Calu3 (cell line): ENCODE measurements at regions of chr5 and their contacts with region 1.

Region 1: DNA sequence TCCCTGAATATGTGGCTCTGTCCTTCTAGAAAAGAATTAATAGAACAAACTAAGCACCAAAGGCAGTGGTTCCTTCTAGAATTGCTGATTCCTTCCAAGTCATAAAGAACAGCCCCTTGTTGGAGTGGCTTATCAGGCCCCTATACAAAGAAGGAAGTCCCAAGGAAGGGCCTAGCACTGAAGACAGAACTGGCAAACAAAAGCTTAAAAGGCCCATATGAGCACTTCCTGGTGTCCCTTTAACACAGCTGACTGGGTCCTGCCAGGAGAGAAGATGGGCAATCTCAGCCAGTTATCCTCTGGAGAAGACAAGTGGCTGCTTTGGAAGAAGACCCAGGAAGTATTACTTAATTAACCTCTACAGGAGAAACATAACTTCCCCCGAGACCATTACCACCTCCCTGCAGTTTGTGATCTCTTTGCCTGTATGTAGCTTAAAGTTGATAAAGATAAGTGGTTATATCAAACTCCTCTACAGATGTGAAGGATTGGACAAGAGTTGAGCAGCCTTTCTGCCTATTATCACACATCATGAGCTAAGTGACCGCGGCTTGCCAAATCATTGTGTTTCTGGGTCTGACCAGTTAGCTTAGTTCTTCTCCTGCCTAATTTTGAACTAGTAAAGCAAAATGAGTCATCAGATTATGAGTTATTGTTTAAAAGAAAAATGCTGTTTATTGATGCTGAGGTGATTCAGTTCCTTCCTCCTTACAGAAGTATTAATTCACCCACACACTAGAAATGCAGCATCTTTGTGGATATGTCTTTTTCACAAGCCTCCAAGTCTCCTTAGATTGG is 13.3 kb upstream of the STING1 start:
- DNase-seq: peak; percentile 28
- H3K4me3 Mint-ChIP-seq: no peak overlapping the region
- H3K27ac Mint-ChIP-seq: peak overlapping the region; percentile 71
- H3K4me1 Mint-ChIP-seq: peaks cover 35% of the 10 kb centered on the region
- H3K27me3 Mint-ChIP-seq: no peaks in the 10 kb centered on the region
- CTCF ChIP-seq: no peak

Region 2: GRCh38 chr5:139422307-139422893 is 73.4 kb before region 1 on chr5:
- CTCF ChIA-PET with region 1: no interaction called
- intact Hi-C with region 1: loop called (anchors 5 kb)
- DNase-seq: peak; percentile 59
- H3K4me3 Mint-ChIP-seq: no peak overlapping the region
- H3K27ac Mint-ChIP-seq: no peak overlapping the region
- H3K4me1 Mint-ChIP-seq: no peaks in the 10 kb centered on the region
- H3K27me3 Mint-ChIP-seq: no peaks in the 10 kb centered on the region
- CTCF ChIP-seq: peak; percentile 90

Region 3: DNA sequence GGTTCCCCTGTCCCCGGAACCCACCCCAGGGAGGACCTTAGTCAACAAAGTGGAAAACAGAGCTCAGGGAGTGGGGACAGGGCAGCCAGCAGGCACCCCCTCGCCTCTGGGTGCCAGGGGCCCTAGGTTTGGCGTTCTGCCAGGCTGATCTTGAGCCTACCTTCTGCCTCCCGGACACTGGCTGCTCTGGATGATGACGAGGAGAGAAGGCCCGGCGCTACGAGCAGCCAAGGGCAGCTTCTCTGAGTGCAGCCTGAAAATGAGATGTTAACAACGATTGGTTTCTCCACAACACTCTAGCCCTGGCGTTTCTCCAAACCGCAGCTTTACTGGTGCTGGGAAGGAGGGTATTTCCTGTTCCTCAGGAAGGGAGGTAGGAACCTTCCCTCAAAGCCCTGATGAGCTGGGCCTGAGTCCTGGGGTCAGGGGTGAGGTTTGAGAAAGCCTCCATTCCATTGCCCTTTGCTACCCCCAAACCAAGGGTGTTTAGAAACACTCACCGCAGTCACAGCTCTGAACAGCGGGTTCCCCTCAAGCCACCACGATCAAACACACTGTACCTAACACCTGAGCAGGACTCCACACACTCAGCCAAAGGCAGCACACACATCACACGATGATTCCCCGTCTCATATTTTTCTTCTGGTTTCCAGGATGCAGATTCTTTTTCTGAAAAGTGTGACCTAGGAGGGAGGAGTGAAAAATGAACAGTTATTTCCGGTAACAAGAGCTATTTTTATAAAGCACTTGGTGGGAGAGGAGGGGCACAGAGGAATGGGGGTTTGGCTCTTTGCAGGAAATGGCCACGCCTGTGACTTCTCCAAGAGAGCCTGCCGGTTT is 13.6 kb before region 1 on chr5 and contains the start of gene STING1:
- CTCF ChIA-PET with region 1: interaction called, 15 read pairs
- intact Hi-C with region 1: no loop called
- DNase-seq: peak; percentile 89
- H3K4me3 Mint-ChIP-seq: peak within 1 kb of the TSS; percentile 54
- H3K27ac Mint-ChIP-seq: peak within 1 kb of the TSS; percentile 89
- H3K4me1 Mint-ChIP-seq: peaks cover 17% of the 10 kb centered on the region
- H3K27me3 Mint-ChIP-seq: no peaks in the 10 kb centered on the region
- CTCF ChIP-seq: no peak
- total RNA-seq, gene STING1: 34.1 and 79.6 TPM in 2 replicates